ENCODE measurements at regions of chr11 and their contacts with region 1.

Region 1: GRCh38 chr11:12963792-12964536 is 45.2 kb upstream of the RASSF10 start:
- DNase-seq: peak; percentile 80
- H3K4me3 Mint-ChIP-seq: no peak overlapping the region
- H3K27ac Mint-ChIP-seq: no peak overlapping the region
- H3K4me1 Mint-ChIP-seq: peaks cover 16% of the 10 kb centered on the region
- H3K27me3 Mint-ChIP-seq: no peaks in the 10 kb centered on the region
- CTCF ChIP-seq: peak; percentile 85

Region 2: GRCh38 chr11:12288212-12288930 is 675.6 kb before region 1 on chr11:
- CTCF ChIA-PET with region 1: interaction called, 9 read pairs
- POLR2A ChIA-PET with region 1: no interaction called
- intact Hi-C with region 1: loop called (anchors 5 kb)
- DNase-seq: peak; percentile 91
- H3K4me3 Mint-ChIP-seq: peak overlapping the region; percentile 26
- H3K27ac Mint-ChIP-seq: peak overlapping the region; percentile 20
- H3K4me1 Mint-ChIP-seq: peaks cover 42% of the 10 kb centered on the region
- H3K27me3 Mint-ChIP-seq: no peaks in the 10 kb centered on the region
- CTCF ChIP-seq: peak; percentile 91

Region 3: GRCh38 chr11:12951376-12951775 is 12.6 kb before region 1 on chr11:
- CTCF ChIA-PET with region 1: interaction called, 10 read pairs
- POLR2A ChIA-PET with region 1: no interaction called
- intact Hi-C with region 1: no loop called
- DNase-seq: no peak
- H3K4me3 Mint-ChIP-seq: no peak overlapping the region
- H3K27ac Mint-ChIP-seq: no peak overlapping the region
- H3K4me1 Mint-ChIP-seq: peaks cover 6% of the 10 kb centered on the region
- H3K27me3 Mint-ChIP-seq: no peaks in the 10 kb centered on the region
- CTCF ChIP-seq: no peak

Region 4: GRCh38 chr11:13152736-13153533 is 189.0 kb after region 1 on chr11:
- CTCF ChIA-PET with region 1: interaction called, 196 read pairs
- POLR2A ChIA-PET with region 1: interaction called, 3 read pairs
- intact Hi-C with region 1: loop called (anchors 1 kb)
- DNase-seq: peak; percentile 60
- H3K4me3 Mint-ChIP-seq: no peak overlapping the region
- H3K27ac Mint-ChIP-seq: no peak overlapping the region
- H3K4me1 Mint-ChIP-seq: no peaks in the 10 kb centered on the region
- H3K27me3 Mint-ChIP-seq: no peaks in the 10 kb centered on the region
- CTCF ChIP-seq: peak; percentile 55

Region 5: GRCh38 chr11:13169709-13170108 is 205.7 kb after region 1 on chr11:
- CTCF ChIA-PET with region 1: interaction called, 28 read pairs
- POLR2A ChIA-PET with region 1: interaction called, 4 read pairs
- intact Hi-C with region 1: no loop called
- DNase-seq: peak; percentile 98
- H3K4me3 Mint-ChIP-seq: no peak overlapping the region
- H3K27ac Mint-ChIP-seq: no peak overlapping the region
- H3K4me1 Mint-ChIP-seq: peaks cover 40% of the 10 kb centered on the region
- H3K27me3 Mint-ChIP-seq: no peaks in the 10 kb centered on the region
- CTCF ChIP-seq: no peak

Region 6: GRCh38 chr11:13238879-13239514 is 275.0 kb after region 1 on chr11:
- CTCF ChIA-PET with region 1: interaction called, 4 read pairs
- POLR2A ChIA-PET with region 1: no interaction called
- intact Hi-C with region 1: loop called (anchors 1 kb)
- DNase-seq: peak; percentile 72
- H3K4me3 Mint-ChIP-seq: no peak overlapping the region
- H3K27ac Mint-ChIP-seq: no peak overlapping the region
- H3K4me1 Mint-ChIP-seq: peaks cover 6% of the 10 kb centered on the region
- H3K27me3 Mint-ChIP-seq: no peaks in the 10 kb centered on the region
- CTCF ChIP-seq: peak; percentile 68